Naive thymus-derived CD4-positive, alpha-beta T cell (primary cell): ENCODE measurements at regions of chr14 and their contacts with region 1.

Region 1: DNA sequence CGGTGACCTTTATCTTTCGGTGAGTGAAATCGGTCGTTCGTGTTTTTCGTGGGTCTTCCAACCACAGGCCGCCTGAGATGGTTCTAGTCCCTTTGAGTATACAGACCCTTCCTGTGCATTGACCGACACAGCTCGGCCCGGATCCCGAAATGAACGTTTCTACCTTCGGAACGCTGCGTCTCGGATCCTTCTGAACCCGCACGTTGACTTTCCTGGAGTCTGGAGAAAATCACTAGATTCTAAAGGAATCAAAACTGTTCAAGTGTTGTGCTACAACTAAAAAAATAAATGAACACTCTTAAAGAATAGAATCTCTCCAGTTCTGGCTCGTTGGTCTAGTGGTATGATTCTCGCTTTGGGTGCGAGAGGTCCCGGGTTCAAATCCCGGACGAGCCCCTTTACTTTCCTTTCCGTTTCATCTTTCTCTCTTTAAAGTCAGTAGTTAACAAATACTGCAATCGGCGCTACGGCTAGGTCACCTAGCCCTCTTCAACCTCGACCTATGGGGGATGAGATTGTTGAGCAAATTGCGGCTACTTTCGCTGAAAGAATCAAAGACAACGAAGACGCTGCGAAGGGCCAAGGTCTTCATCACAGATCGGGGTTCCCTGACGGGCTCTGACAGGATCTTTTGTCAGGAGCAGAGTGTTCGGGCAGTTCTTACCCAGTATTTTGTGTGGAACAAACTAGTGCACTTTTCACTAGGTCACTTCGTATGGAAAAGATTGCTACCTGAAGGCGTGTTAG is 8.6 kb downstream of the OR6S1 start:
- DNase-seq: peak in 8 of 9 donors; percentile 45 to 80 (median 64)
- ATAC-seq: peak; percentile 70
- H3K4me3 ChIP-seq: peak overlapping the region; percentile 51
- H3K4me3 Mint-ChIP-seq: peak overlapping the region; percentile 74 to 93 (median 88)
- H3K27ac ChIP-seq: no peak overlapping the region
- H3K27ac Mint-ChIP-seq: peak overlapping the region; percentile 77 to 98 (median 88)
- H3K4me1 ChIP-seq: peaks cover 0 to 11% of the 10 kb centered on the region in 2 donors
- H3K4me1 Mint-ChIP-seq: peaks cover 17 to 59% (median 45%) of the 10 kb centered on the region in 7 donors
- H3K27me3 ChIP-seq: no peaks in the 10 kb centered on the region
- H3K27me3 Mint-ChIP-seq: peaks cover 26 to 82% (median 35%) of the 10 kb centered on the region in 5 donors

Region 2: DNA sequence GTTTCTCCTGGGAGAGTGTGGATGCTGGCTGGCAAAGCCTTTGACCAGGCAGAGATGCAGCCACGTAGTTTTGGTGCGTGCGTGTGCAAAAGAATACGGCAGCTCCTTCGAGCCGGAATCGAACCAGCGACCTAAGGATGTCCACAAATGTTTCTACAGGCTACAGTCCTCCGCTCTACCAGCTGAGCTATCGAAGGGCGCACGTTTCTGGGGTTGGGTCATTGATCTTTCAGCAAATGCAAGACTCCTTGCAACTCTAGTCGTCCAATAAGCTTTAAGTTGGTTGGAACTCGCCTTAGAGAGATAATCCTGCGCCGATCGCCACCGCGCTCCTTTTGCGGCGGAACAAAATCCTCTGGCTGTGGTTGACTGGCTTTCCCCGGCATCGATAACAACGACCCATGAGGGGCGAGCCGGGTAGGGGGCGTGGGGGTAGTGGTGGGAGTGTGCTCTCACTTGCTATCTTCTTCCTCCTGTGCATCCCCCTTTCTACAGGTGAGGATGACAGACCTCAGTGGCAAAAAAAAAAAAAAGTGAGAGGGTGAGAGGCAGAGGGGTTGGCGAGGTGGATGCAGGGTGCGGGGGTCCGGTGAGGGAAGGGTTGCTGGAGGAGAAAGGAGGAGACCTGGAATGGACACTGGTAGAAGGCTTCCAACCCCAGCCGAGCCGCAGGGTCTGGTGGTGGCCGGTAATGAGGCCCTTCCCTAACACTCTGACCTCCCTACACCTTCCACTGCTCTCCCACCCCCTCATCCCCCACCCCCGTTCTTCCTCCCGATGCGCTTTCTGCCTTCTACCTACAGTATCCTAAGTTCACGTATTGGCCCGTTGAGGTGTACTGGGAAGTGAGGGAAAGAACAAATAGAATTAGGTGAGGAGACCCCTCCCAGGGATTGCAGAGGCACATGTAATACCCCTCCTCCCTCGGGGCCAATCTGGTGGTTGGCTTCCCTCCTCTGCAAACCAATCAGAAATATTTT is 20.4 kb after region 1 on chr14:
- CTCF ChIA-PET with region 1: no interaction called
- POLR2A ChIA-PET with region 1: no interaction called
- intact Hi-C with region 1: loop called in 1 of 2 experiments (anchors 1 kb)
- DNase-seq: peak in 8 of 9 donors; percentile 22 to 61 (median 36)
- ATAC-seq: peak; percentile 56
- H3K4me3 ChIP-seq: no peak overlapping the region
- H3K4me3 Mint-ChIP-seq: peak overlapping the region; percentile 43 to 73 (median 61)
- H3K27ac ChIP-seq: no peak overlapping the region
- H3K27ac Mint-ChIP-seq: peak overlapping the region in 1 of 9 donors; percentile 69
- H3K4me1 ChIP-seq: peaks cover 0 to 6% of the 10 kb centered on the region in 2 donors
- H3K4me1 Mint-ChIP-seq: peaks cover 18 to 34% (median 31%) of the 10 kb centered on the region in 7 donors
- H3K27me3 ChIP-seq: peaks cover 9 to 25% of the 10 kb centered on the region in 2 donors
- H3K27me3 Mint-ChIP-seq: peaks cover 71 to 78% (median 73%) of the 10 kb centered on the region in 5 donors

Region 3: DNA sequence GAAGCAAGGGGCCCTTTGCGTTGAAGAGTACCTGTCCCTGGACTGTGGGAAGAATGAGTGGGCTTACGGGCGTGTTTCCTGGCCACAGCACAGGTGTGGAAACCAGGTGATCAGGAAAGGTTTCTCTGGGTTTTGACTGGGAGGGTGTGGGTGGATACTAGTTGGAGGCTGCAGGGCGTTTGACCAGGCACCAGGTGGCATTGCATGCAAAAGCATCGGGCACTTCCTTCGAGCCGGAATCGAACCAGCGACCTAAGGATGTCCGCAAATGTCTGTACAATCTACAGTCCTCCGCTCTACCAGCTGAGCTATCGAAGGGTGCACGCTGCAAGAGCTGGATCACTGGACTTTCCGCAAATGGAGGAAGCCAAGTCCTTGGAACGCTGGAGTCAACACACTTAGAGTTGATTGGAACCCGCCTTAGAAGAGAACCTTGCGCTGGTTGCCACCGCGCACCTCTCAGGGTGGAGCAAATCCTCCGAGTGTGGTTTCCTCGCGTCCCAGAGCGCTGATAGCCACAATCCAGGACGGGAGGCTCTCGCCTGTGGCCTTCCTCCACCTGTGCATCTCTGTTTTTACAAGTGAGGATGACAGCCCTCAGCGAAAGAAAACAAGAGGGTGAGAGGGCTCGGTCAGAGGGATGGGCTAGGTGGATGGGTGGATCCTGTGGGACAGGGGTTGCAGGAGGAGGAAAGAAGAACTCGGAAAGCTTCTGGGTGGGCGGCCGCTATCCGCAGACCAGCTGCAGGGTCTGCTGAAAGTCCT is 30.3 kb after region 1 on chr14:
- CTCF ChIA-PET with region 1: interaction called, 3 read pairs
- POLR2A ChIA-PET with region 1: no interaction called
- intact Hi-C with region 1: loop called (anchors 2 to 5 kb)
- DNase-seq: peak; percentile 49 to 77 (median 66)
- ATAC-seq: peak; percentile 91
- H3K4me3 ChIP-seq: peak overlapping the region; percentile 59
- H3K4me3 Mint-ChIP-seq: peak overlapping the region; percentile 72 to 86 (median 79)
- H3K27ac ChIP-seq: no peak overlapping the region
- H3K27ac Mint-ChIP-seq: peak overlapping the region in 8 of 9 donors; percentile 18 to 74 (median 39)
- H3K4me1 ChIP-seq: peaks cover 3 to 17% of the 10 kb centered on the region in 2 donors
- H3K4me1 Mint-ChIP-seq: peaks cover 23 to 53% (median 25%) of the 10 kb centered on the region in 7 donors
- H3K27me3 ChIP-seq: no peaks in the 10 kb centered on the region
- H3K27me3 Mint-ChIP-seq: peaks cover 5 to 23% (median 19%) of the 10 kb centered on the region in 5 donors

Region 4: GRCh38 chr14:20782280-20782890 is 149.5 kb after region 1 on chr14:
- CTCF ChIA-PET with region 1: no interaction called
- POLR2A ChIA-PET with region 1: no interaction called
- intact Hi-C with region 1: loop called in 1 of 2 experiments (anchors 10 kb)
- DNase-seq: peak in 6 of 9 donors; percentile 2 to 36 (median 22)
- ATAC-seq: peak; percentile 73
- H3K4me3 ChIP-seq: peak overlapping the region; percentile 17
- H3K4me3 Mint-ChIP-seq: peak overlapping the region; percentile 52 to 87 (median 81)
- H3K27ac ChIP-seq: peak overlapping the region; percentile 62
- H3K27ac Mint-ChIP-seq: peak overlapping the region; percentile 67 to 93 (median 85)
- H3K4me1 ChIP-seq: peaks cover 11 to 29% of the 10 kb centered on the region in 2 donors
- H3K4me1 Mint-ChIP-seq: peaks cover 32 to 50% (median 42%) of the 10 kb centered on the region in 7 donors
- H3K27me3 ChIP-seq: no peaks in the 10 kb centered on the region
- H3K27me3 Mint-ChIP-seq: peaks cover 0 to 11% (median 0%) of the 10 kb centered on the region in 5 donors